Activated CD4-positive, alpha-beta memory T cell treated with anti-CD3 and anti-CD28 coated beads, Interleukin-2, amount 10 ng/mL, durations not matched to agents 7 days and 5 days (primary cell): ENCODE measurements at regions of chrX and their contacts with region 1.

Region 1: DNA sequence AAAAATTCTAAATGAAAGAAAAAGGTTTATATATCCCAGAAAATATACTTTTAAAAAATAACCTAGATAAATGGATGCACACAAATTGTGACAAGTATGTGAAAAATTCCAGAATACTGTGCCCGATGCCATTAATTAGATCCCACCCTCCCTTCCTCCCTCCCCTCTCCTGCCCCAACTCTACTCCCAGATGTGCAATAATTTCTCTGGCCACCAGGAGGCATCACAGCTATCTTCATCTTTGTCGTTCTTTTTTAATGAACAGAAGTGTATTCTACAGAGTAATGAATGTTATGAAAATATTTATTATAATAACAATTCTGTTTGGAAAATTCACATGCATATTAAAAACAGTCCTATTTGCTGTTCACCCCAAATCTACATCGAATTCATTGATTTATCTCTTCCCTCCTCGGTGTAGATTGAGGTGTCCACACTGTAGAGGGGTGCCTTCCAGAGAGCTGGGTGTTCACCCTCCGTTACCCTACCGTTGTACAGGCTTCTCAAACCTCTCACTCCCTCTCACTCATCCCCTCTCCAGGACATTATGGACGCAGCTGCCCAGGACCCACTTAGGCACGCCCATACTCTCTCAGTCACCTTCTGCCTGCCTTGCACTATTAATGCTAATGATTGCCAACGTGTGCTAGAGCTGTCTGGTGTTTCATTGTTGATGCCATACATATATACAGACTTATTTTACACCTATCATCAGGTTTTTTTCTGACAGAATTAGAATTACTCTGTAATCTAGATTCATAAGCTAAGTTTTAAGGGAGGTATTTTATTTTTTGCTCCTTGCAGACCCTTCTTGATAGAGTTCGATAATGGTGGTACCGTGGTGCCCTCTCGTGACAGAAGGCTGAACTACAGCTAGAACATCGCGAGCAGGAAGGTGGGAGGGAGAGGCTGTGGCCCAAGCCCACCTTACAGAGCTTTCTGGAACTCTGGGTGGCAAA is 14.1 kb downstream of the RAB40AL start:
- DNase-seq: peak; percentile 43
- H3K4me3 Mint-ChIP-seq: peak overlapping the region; percentile 27
- H3K27ac Mint-ChIP-seq: no peak overlapping the region
- H3K4me1 Mint-ChIP-seq: peaks cover 5% of the 10 kb centered on the region
- H3K27me3 Mint-ChIP-seq: peaks cover 2% of the 10 kb centered on the region

Region 2: DNA sequence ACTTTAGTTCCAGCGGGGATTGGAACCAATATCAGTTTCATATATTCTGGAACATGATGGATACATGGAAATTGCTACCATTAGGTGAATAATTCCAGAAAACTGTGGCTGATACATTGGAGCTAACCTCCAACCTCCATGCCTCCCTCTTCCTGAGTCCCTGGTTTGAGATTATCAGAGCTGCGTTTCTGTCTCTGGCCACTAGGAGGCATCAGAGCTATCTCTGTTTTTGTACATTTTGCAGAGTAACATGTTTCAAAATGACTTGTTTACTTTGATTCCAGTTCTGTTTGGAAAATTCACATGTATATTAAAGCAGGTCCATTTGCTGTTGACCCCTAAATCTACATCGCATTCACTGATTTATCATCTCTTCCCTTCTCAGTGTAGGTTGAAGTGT is 16.6 kb before region 1 on chrX:
- CTCF ChIA-PET with region 1: interaction called, 15 read pairs
- POLR2A ChIA-PET with region 1: no interaction called
- DNase-seq: peak; percentile 31
- H3K4me3 Mint-ChIP-seq: no peak overlapping the region
- H3K27ac Mint-ChIP-seq: no peak overlapping the region
- H3K4me1 Mint-ChIP-seq: no peaks in the 10 kb centered on the region
- H3K27me3 Mint-ChIP-seq: no peaks in the 10 kb centered on the region

Region 3: DNA sequence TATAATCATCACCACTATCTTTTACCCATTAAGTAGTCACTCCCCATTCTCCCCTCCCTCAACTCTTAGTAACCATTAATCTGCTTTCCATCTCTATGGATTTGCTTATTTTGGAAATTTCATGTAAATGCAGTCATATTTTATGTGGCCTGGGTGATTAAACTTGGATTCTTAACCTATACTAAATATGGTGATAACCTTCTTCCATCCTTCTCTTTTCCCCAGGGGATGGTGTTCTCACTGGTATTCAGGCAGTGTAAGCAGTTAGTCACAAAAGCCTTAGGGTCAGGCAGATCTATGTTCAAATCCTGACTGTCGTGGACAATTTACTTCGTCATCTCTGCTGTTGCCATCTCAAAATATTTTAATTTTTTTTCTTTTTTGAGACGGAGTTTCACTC is 15.5 kb after region 1 on chrX:
- CTCF ChIA-PET with region 1: no interaction called
- POLR2A ChIA-PET with region 1: no interaction called
- DNase-seq: no peak
- H3K4me3 Mint-ChIP-seq: no peak overlapping the region
- H3K27ac Mint-ChIP-seq: no peak overlapping the region
- H3K4me1 Mint-ChIP-seq: no peaks in the 10 kb centered on the region
- H3K27me3 Mint-ChIP-seq: no peaks in the 10 kb centered on the region

Region 4: DNA sequence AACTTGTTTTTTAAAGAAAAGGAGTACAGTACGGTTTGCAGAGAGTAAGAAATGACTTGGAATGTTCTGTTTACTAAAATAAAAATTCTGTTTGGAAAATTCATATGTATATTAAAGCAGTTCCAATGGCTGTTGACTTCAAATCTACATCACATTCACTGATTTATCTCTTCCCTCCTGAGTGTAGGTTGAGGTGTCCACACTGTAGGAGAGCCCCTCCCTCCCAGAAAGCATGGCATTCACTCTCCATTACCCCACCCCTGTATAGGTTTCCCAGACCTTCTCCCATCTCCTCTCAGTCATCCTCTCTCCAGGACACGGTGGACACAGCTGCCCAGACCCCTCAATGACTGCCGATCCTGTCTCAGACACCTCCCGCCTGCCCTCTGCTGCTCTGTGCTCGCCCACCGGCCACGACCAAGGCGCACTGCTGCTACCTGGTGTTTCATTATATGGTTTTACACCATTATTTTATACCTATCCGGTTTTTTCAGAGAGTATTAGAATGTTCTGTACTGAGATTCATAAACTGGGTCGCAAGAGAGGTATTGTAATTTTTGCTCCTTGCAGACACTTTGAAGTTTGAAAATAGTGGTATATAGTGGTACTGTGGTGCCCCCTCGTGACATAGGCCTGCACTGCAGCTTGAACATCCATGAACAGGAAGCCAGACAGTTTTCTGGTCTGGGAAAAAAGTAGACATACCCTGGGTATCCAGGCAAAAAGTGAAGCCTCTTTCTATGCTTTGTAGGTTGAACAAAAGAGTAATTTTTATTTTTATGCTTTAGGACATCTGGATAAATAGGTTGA is 225.0 kb after region 1 on chrX:
- CTCF ChIA-PET with region 1: interaction called, 26 read pairs
- POLR2A ChIA-PET with region 1: no interaction called
- DNase-seq: peak; percentile 57
- H3K4me3 Mint-ChIP-seq: no peak overlapping the region
- H3K27ac Mint-ChIP-seq: no peak overlapping the region
- H3K4me1 Mint-ChIP-seq: peaks cover 3% of the 10 kb centered on the region
- H3K27me3 Mint-ChIP-seq: peaks cover 3% of the 10 kb centered on the region